A673 (cell line): ENCODE measurements at regions of chr6 and their contacts with region 1.

Region 1: GRCh38 chr6:27893059-27893835 is 18.9 kb downstream of the OR2B2 start:
- DNase-seq: peak; percentile 97
- H3K4me3 ChIP-seq: peak overlapping the region; percentile 63
- H3K27ac ChIP-seq: peak overlapping the region; percentile 94
- H3K4me1 ChIP-seq: peaks cover 22% of the 10 kb centered on the region
- H3K27me3 ChIP-seq: no peaks in the 10 kb centered on the region
- CTCF ChIP-seq: no peak

Region 2: GRCh38 chr6:26031595-26032339 is 1861.5 kb before region 1 on chr6:
- CTCF ChIA-PET with region 1: interaction called, 4 read pairs
- POLR2A ChIA-PET with region 1: no interaction called
- intact Hi-C with region 1: loop called (anchors 5 kb)
- DNase-seq: peak; percentile 99
- H3K4me3 ChIP-seq: peak overlapping the region; percentile 67
- H3K27ac ChIP-seq: peak overlapping the region; percentile 91
- H3K4me1 ChIP-seq: peaks cover 21% of the 10 kb centered on the region
- H3K27me3 ChIP-seq: no peaks in the 10 kb centered on the region
- CTCF ChIP-seq: peak; percentile 33; the same call in 1 of the 2 replicates

Region 3: GRCh38 chr6:26292709-26293108 is 1600.5 kb before region 1 on chr6:
- CTCF ChIA-PET with region 1: no interaction called
- POLR2A ChIA-PET with region 1: interaction called, 19 read pairs
- intact Hi-C with region 1: no loop called
- DNase-seq: no peak
- H3K4me3 ChIP-seq: no peak overlapping the region
- H3K27ac ChIP-seq: no peak overlapping the region
- H3K4me1 ChIP-seq: no peaks in the 10 kb centered on the region
- H3K27me3 ChIP-seq: no peaks in the 10 kb centered on the region
- CTCF ChIP-seq: no peak

Region 4: DNA sequence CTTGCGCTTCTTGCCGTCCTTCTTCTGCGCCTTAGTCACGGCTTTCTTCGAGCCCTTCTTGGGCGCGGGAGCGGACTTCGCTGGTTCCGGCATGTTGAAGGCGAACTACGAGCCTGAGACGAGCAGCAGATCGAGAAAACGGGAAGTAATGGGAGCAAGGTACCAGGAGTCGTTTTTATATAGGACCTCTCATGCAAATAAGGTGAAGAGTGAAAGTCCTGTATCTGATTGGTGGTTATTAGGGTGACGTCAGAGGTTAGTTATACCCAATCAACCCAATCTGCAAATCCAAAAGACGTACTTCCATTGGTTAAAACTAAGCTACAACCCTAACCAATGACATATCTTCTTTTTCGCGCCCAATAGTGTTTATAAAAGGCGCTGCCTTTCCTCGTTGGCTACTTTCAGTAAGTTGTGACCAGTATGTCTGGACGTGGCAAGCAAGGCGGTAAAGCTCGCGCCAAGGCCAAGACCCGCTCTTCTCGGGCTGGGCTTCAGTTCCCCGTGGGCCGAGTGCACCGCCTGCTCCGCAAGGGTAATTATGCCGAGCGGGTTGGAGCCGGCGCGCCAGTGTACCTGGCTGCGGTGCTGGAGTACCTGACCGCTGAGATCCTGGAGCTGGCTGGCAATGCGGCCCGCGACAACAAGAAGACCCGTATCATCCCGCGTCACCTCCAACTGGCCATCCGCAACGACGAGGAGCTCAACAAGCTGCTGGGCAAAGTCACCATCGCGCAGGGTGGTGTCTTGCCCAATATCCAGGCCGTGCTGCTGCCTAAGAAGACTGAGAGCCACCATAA is 746.3 kb before region 1 on chr6:
- CTCF ChIA-PET with region 1: no interaction called
- POLR2A ChIA-PET with region 1: interaction called, 7 read pairs
- intact Hi-C with region 1: loop called (anchors 5 kb)
- DNase-seq: peak; percentile 98
- H3K4me3 ChIP-seq: peak overlapping the region; percentile 53
- H3K27ac ChIP-seq: peak overlapping the region; percentile 92
- H3K4me1 ChIP-seq: peaks cover 5% of the 10 kb centered on the region
- H3K27me3 ChIP-seq: no peaks in the 10 kb centered on the region
- CTCF ChIP-seq: no peak

Region 5: GRCh38 chr6:27809939-27810767 is 83.1 kb before region 1 on chr6:
- CTCF ChIA-PET with region 1: interaction called, 3 read pairs
- POLR2A ChIA-PET with region 1: interaction called, 25 read pairs
- intact Hi-C with region 1: loop called (anchors 5 kb)
- DNase-seq: peak; percentile 97
- H3K4me3 ChIP-seq: peak overlapping the region; percentile 70
- H3K27ac ChIP-seq: peak overlapping the region; percentile 83
- H3K4me1 ChIP-seq: peaks cover 18% of the 10 kb centered on the region
- H3K27me3 ChIP-seq: no peaks in the 10 kb centered on the region
- CTCF ChIP-seq: peak; percentile 30; the same call in 1 of the 2 replicates

Region 6: DNA sequence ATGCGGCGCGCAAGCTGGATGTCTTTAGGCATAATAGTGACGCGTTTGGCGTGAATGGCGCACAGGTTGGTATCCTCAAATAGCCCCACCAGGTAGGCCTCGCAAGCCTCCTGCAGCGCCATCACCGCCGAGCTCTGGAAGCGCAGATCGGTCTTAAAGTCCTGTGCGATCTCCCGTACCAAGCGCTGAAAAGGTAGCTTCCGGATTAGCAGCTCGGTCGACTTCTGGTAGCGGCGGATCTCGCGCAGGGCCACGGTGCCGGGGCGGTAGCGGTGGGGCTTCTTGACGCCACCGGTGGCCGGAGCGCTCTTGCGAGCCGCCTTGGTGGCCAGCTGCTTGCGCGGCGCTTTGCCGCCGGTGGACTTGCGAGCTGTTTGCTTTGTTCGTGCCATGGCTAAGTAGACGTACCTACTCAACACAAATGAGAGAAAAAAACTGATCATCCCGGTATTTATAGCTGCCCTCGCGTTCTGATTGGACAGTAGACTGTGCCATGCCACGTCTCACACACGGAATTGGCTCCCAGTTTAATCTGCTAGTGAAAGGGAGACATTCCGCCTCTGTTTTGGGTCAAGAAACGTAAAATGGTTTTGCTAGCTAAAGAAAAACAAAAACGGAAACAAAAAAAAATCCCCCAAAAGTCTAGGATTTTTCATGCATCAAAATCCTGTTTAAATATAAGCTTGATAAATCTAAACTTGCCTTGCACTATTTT is 21.2 kb before region 1 on chr6:
- CTCF ChIA-PET with region 1: no interaction called
- POLR2A ChIA-PET with region 1: interaction called, 78 read pairs
- intact Hi-C with region 1: loop called (anchors 2 kb)
- DNase-seq: peak; percentile 97
- H3K4me3 ChIP-seq: peak overlapping the region; percentile 62
- H3K27ac ChIP-seq: peak overlapping the region; percentile 93
- H3K4me1 ChIP-seq: peaks cover 12% of the 10 kb centered on the region
- H3K27me3 ChIP-seq: no peaks in the 10 kb centered on the region
- CTCF ChIP-seq: peak; percentile 37

Region 7: DNA sequence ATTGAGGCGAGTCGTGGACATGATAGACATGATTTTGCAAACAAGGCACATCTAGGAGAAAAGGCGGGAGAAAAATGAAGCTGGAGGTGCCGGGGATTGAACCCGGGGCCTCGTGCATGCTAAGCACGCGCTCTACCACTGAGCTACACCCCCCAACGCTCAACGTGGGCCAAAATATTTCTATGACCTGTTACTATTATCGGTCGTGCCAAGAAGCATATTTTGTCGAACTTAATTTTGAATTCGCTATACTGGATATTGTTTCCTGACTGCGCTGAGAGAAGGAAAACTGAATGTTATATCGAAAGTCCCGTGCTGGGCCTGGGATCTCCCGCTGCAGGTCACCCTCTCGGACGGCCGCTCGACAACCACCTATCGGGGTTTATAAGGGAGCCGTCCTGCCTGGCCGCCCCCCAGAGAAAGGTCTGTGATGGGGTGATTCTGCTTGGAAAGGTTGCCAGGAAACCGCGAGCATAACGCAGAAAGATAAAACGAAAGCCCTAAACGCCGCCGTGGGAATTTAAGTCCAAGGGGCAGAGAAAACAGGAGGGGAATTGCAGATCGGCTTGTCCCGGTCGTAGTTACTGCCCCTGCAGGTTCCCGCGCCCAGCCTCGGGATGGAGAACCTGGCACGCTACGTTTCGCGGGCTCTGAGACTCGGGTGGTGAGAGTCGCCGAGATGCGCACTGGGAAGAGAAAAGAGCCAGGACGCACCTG is 970.5 kb after region 1 on chr6:
- CTCF ChIA-PET with region 1: no interaction called
- POLR2A ChIA-PET with region 1: no interaction called
- intact Hi-C with region 1: loop called (anchors 10 kb)
- DNase-seq: peak; percentile 90
- H3K4me3 ChIP-seq: peak overlapping the region; percentile 69
- H3K27ac ChIP-seq: peak overlapping the region; percentile 73
- H3K4me1 ChIP-seq: peaks cover 15% of the 10 kb centered on the region
- H3K27me3 ChIP-seq: no peaks in the 10 kb centered on the region
- CTCF ChIP-seq: no peak